Ascending aorta (tissue), 2 donors: ENCODE measurements at regions of chr5 and their contacts with region 1.

Region 1: GRCh38 chr5:98905857-98906690 is 22.7 kb downstream of the CHD1 start:
- DNase-seq: no peak
- H3K4me3 ChIP-seq: no peak overlapping the region
- H3K27ac ChIP-seq: no peak overlapping the region
- H3K4me1 ChIP-seq: no peaks in the 10 kb centered on the region
- H3K27me3 ChIP-seq: no peaks in the 10 kb centered on the region
- CTCF ChIP-seq: peak; percentile 68 to 73 (median 71)

Region 2: GRCh38 chr5:98839469-98840383 is 66.3 kb before region 1 on chr5:
- intact Hi-C with region 1: no loop called
- DNase-seq: no peak
- H3K4me3 ChIP-seq: peak overlapping the region; percentile 13 to 19
- H3K27ac ChIP-seq: no peak overlapping the region
- H3K4me1 ChIP-seq: no peaks in the 10 kb centered on the region
- H3K27me3 ChIP-seq: no peaks in the 10 kb centered on the region
- CTCF ChIP-seq: peak in 1 of 3 experiments; percentile 11

Region 3: GRCh38 chr5:99032234-99033013 is 126.3 kb after region 1 on chr5:
- intact Hi-C with region 1: loop called (anchors 1 kb)
- DNase-seq: peak in 1 of 2 donors; percentile 76
- H3K4me3 ChIP-seq: peak overlapping the region in 1 of 2 donors; percentile 57
- H3K27ac ChIP-seq: no peak overlapping the region
- H3K4me1 ChIP-seq: no peaks in the 10 kb centered on the region
- H3K27me3 ChIP-seq: no peaks in the 10 kb centered on the region
- CTCF ChIP-seq: peak; percentile 33 to 79 (median 67)

Region 4: GRCh38 chr5:99060306-99061261 is 154.5 kb after region 1 on chr5:
- intact Hi-C with region 1: loop called (anchors 10 kb)
- DNase-seq: peak in 1 of 2 donors; percentile 72
- H3K4me3 ChIP-seq: no peak overlapping the region
- H3K27ac ChIP-seq: no peak overlapping the region
- H3K4me1 ChIP-seq: no peaks in the 10 kb centered on the region
- H3K27me3 ChIP-seq: no peaks in the 10 kb centered on the region
- CTCF ChIP-seq: peak; percentile 41 to 86 (median 78)